ENCODE measurements at regions of chr16 and their contacts with region 1.

Region 1: DNA sequence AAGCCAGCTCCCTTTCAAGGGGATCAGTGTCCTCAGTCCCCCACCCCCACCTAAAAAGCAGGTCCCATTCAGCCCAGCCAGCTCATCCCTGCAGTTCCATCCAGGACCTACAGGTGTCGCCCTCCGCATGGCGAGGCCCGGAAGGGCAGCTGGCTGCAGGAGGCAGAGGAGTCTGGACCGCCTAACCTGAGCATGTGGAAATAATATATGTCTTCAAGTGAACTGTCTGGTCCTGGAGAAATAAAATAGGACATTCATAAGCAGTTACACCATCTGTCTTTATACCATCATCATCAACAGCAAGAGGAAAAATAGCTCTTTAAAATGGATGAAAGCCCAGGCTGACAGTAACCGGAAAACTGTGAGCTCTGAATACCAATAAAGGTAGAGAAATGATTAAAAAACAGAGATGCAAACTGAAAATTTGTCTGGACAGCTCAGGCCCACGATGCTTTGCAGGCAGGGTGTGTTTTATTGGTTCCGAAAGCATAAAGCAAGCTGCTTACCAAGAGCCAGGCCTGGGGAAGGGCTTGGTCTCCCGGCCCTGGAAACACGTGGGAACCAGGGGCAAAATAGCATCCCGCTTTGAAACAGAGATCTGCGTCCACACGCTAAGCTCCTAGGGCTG is 215.2 kb downstream of the ZFHX3 start:
- DNase-seq: peak; percentile 81
- ATAC-seq: peak; percentile 88 to 93

Region 2: DNA sequence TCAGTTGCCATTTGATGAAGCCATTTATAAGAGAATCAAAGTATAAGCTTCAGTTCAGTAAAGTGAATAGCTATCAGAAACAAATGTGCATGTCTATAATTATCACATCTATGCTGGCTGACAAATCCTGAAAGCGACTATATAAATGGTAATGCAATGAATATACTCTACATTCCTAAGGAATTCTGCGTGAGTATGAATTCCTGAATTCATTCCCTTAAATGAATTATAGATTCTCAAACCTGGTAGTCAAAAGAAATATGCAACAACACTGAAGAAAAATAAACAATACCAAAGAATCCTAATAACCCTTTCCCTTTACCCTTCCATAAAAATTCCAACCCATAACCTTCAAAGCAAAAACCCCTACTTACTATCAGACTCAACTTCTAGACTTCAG is 244.2 kb before region 1 on chr16:
- intact Hi-C with region 1: no loop called
- DNase-seq: no peak
- ATAC-seq: no peak

Region 3: DNA sequence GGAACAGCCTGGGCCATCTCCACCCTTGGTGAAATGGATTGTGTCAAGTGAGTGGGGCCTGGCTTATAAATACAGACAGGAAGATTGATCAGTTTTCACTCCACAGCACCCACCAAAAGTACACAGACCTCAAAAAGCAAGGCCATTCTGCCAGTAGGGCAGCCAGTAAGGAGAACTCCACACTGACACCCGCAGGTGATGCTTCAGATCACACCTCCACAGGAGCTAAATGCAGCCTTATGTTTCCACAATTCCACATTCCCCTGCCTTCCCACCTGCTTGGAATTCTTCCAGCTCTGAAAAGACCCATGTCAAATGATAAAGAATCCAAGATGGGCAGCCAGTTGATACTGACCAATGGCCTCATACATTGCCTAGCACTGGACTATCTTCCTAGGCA is 24.1 kb after region 1 on chr16:
- intact Hi-C with region 1: no loop called
- DNase-seq: no peak
- ATAC-seq: no peak

Region 4: GRCh38 chr16:73000020-73000906 is 167.5 kb after region 1 on chr16:
- intact Hi-C with region 1: no loop called
- DNase-seq: peak; percentile 59
- ATAC-seq: peak; percentile 68 to 77

Region 5: GRCh38 chr16:73047518-73048291 is 215.0 kb after region 1 on chr16 and contains the start of gene ZFHX3:
- intact Hi-C with region 1: loop called (anchors 5 to 10 kb)
- DNase-seq: peak; percentile 77
- ATAC-seq: peak; percentile 70 to 78
- total RNA-seq, gene ZFHX3: 11.9 to 12.6 TPM

Region 6: GRCh38 chr16:73058221-73058615 is 225.5 kb after region 1 on chr16:
- intact Hi-C with region 1: loop called in 1 of 2 experiments (anchors 10 kb)
- DNase-seq: peak; percentile 51
- ATAC-seq: peak; percentile 35 to 60

Region 7: GRCh38 chr16:73172241-73172972 is 339.7 kb after region 1 on chr16:
- intact Hi-C with region 1: loop called in 1 of 2 experiments (anchors 5 kb)
- DNase-seq: peak; percentile 80
- ATAC-seq: peak; percentile 81 to 85

Region 8: GRCh38 chr16:73196670-73197069 is 363.9 kb after region 1 on chr16:
- intact Hi-C with region 1: loop called (anchors 5 to 10 kb)
- DNase-seq: peak; percentile 74
- ATAC-seq: peak; percentile 86 to 88

Region 9: DNA sequence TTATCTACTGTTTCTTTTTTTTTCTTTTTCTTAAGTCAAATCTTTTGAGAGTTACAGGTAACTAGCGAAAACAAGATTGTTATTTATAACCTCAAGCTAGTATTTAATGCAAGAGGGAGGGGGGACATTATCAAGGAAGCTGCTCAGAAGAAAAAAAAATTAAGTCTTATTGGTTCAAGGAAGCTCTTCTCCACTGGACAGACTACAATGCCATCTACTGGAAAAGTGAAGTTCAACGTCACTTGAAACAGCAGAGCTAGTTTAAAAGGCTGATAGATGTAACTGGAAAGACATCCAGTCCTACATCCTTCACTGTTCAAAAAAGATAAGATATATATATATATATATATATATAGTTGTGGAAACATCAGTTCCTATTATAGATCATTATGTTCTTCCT is 1045.9 kb after region 1 on chr16:
- intact Hi-C with region 1: loop called in 1 of 2 experiments (anchors 5 kb)
- DNase-seq: no peak
- ATAC-seq: peak in 1 of 2 donors; percentile 30